ENCODE measurements at regions of chr6 and their contacts with region 1.

Region 1: DNA sequence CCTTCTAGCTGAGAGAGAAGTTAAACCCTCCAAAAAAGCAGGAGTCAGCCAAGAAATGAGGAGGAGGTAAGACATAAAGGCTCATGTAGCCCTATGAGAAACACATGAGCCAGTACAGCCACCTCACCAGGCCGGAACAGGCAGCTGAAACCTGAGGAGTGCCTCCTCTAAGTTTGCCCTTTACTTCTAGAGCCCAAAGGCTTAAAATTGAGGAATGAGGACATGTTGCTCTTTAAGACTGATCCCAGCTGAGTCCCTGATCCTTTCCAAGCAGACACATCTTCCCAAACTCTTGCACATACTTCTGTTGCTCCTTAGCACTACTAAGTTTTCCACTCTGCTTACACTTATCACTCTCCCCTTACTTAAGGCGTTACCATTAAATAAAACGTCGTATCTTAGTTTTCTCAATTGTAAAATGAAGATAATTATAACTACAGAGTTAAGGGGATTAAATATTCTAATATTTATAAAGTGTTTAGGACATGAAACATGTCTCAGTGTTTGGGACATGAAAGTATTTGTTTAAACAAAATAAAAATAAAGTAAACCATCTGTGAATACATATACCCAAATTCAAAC is 124.0 kb downstream of the OGFRL1 start:
- DNase-seq: no peak
- H3K4me3 Mint-ChIP-seq: peak overlapping the region; percentile 68
- H3K27ac Mint-ChIP-seq: peak overlapping the region; percentile 92
- H3K4me1 Mint-ChIP-seq: peaks cover 65% of the 10 kb centered on the region
- H3K27me3 Mint-ChIP-seq: no peaks in the 10 kb centered on the region
- CTCF ChIP-seq: no peak

Region 2: GRCh38 chr6:71038711-71039344 is 373.8 kb before region 1 on chr6:
- CTCF ChIA-PET with region 1: no interaction called
- intact Hi-C with region 1: no loop called
- DNase-seq: no peak
- H3K4me3 Mint-ChIP-seq: no peak overlapping the region
- H3K27ac Mint-ChIP-seq: no peak overlapping the region
- H3K4me1 Mint-ChIP-seq: no peaks in the 10 kb centered on the region
- H3K27me3 Mint-ChIP-seq: peaks cover 70% of the 10 kb centered on the region
- CTCF ChIP-seq: no peak

Region 3: GRCh38 chr6:71375676-71376075 is 37.0 kb before region 1 on chr6:
- CTCF ChIA-PET with region 1: no interaction called
- intact Hi-C with region 1: loop called (anchors 2 kb)
- DNase-seq: peak; percentile 47
- H3K4me3 Mint-ChIP-seq: peak overlapping the region; percentile 20
- H3K27ac Mint-ChIP-seq: peak overlapping the region; percentile 74
- H3K4me1 Mint-ChIP-seq: peaks cover 53% of the 10 kb centered on the region
- H3K27me3 Mint-ChIP-seq: no peaks in the 10 kb centered on the region
- CTCF ChIP-seq: no peak

Region 4: DNA sequence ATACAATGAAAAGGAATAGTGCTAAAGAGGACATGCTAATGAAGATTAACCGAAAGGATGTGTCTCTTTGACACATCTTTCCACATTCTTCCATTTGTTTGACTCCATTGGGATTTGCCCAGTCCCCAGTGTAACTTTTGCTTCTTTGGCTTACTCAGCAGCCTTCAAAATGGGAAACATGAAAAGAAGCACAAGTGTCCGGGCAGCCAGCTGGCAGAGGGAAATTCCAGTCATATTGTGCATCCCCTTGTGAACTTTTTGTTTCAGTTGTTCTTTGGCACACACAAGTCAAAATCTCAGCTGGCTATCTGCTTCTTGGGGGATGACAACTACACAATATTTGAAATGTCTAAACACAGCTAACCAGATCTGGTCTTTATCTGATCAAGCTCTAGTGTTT is 33.4 kb after region 1 on chr6:
- CTCF ChIA-PET with region 1: no interaction called
- intact Hi-C with region 1: no loop called
- DNase-seq: no peak
- H3K4me3 Mint-ChIP-seq: no peak overlapping the region
- H3K27ac Mint-ChIP-seq: no peak overlapping the region
- H3K4me1 Mint-ChIP-seq: no peaks in the 10 kb centered on the region
- H3K27me3 Mint-ChIP-seq: no peaks in the 10 kb centered on the region
- CTCF ChIP-seq: no peak